ENCODE measurements at regions of chr4 and their contacts with region 1.

Region 1: DNA sequence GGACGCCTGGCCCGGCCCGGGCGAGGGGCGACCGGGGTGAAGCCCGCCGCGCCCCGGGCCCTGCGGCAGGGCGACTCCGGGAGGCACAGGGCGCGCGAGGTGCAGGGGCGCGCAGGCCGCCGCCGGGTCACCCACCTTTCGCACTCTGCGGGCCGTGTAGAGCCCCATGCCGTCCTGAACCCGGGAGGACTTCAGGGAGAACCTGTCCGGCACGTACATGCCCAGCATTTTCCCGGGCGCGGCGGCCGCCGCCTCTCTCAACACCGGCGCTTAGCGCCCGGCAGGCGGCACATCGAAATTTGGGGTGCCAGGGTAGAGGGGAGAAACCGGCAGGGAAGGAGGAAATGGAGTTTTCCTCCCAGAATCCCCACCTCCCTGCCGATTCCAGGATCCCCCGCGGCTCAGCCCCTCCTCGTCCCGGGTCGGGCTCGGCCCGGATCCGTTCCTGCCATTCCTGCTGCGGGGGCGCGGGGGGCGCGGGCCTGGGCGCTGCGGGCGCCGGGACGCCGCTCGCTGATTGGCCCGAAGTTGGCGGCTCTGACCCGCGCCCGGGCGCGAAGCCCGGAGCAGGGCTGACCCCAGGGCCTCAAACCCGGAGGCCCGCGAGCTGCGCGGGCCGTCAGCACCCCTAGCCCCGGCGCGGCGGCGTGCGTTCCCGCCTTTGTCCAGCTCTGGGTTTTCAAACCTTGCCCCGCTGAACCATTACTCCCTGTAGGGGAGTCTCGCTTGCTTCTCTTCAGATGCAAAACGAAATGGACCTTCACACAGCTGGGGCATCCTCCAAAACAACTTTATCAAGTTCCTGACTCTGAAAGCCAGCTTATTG is at the start of gene PRDM5:
- DNase-seq: no peak
- H3K4me3 ChIP-seq: peak within 1 kb of the TSS; percentile 72 to 85 (median 82)
- H3K27ac ChIP-seq: peak within 1 kb of the TSS; percentile 91 to 96 (median 94)
- H3K4me1 ChIP-seq: peaks cover 12 to 42% (median 30%) of the 10 kb centered on the region in 4 donors
- H3K27me3 ChIP-seq: no peaks in the 10 kb centered on the region
- CTCF ChIP-seq: peak; percentile 5 to 20 (median 17)
- EP300 ChIP-seq: no peak
- POLR2A ChIP-seq: no peak
- total RNA-seq, gene PRDM5: 10.8 to 17.0 (median 15.4) TPM

Region 2: GRCh38 chr4:121072224-121073003 is 149.8 kb after region 1 on chr4 and contains the start of gene NDNF:
- intact Hi-C with region 1: loop called (anchors 5 kb)
- DNase-seq: no peak
- H3K4me3 ChIP-seq: peak within 1 kb of the TSS; percentile 64 to 78 (median 67)
- H3K27ac ChIP-seq: peak within 1 kb of the TSS; percentile 53 to 75 (median 61)
- H3K4me1 ChIP-seq: peaks cover 5 to 29% (median 24%) of the 10 kb centered on the region in 4 donors
- H3K27me3 ChIP-seq: peaks cover 0 to 29% (median 0%) of the 10 kb centered on the region in 4 donors
- CTCF ChIP-seq: no peak
- EP300 ChIP-seq: no peak
- POLR2A ChIP-seq: no peak
- total RNA-seq, gene NDNF: 11.6 to 16.0 (median 12.1) TPM